ENCODE measurements at regions of chr16 and their contacts with region 1.

Region 1: GRCh38 chr16:81737885-81738786 is 41.0 kb upstream of the PLCG2 start:
- DNase-seq: peak; percentile 96
- H3K4me3 Mint-ChIP-seq: peak overlapping the region; percentile 71
- H3K27ac Mint-ChIP-seq: peak overlapping the region; percentile 35
- H3K4me1 Mint-ChIP-seq: peaks cover 12% of the 10 kb centered on the region
- H3K27me3 Mint-ChIP-seq: peaks cover 2% of the 10 kb centered on the region

Region 2: GRCh38 chr16:81035398-81035974 is 702.6 kb before region 1 on chr16 and contains the start of gene ATMIN:
- intact Hi-C with region 1: loop called (anchors 1 kb)
- DNase-seq: peak; percentile 97
- H3K4me3 Mint-ChIP-seq: peak within 1 kb of the TSS; percentile 88
- H3K27ac Mint-ChIP-seq: peak within 1 kb of the TSS; percentile 69
- H3K4me1 Mint-ChIP-seq: peaks cover 20% of the 10 kb centered on the region
- H3K27me3 Mint-ChIP-seq: no peaks in the 10 kb centered on the region
- total RNA-seq, gene ATMIN: 31.1 and 33.5 TPM in 2 replicates

Region 3: GRCh38 chr16:81204798-81205680 is 533.1 kb before region 1 on chr16:
- intact Hi-C with region 1: loop called (anchors 1 kb)
- DNase-seq: peak; percentile 80
- H3K4me3 Mint-ChIP-seq: no peak overlapping the region
- H3K27ac Mint-ChIP-seq: no peak overlapping the region
- H3K4me1 Mint-ChIP-seq: no peaks in the 10 kb centered on the region
- H3K27me3 Mint-ChIP-seq: peaks cover 5% of the 10 kb centered on the region

Region 4: DNA sequence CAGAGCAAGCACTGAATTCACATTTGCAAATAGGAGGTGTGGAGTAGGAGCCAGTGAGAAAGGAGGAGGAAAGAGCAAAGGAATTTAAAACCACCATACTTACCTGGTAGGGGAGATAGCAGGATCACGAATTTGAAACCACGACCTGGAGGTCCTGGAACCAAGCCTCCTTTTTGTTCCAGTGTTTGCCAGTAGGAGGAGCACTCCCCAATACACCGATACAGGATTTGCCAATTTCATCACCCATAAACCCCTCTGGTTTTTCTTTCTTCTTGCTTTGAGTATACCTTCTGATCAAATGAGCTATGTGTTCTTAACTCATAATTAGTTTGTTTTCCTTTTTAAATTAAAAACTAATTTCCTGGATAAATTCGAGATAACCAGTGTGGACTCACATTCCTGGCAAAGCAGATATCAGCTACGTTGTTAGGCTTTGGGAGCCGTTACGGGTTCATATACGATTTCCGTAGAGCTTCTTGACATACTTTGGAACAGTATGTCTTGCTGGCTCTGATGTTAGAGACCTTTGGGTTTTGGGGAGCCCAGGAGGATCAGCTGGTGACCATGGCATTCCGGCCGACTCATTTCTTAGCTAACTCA is 477.0 kb before region 1 on chr16:
- intact Hi-C with region 1: loop called (anchors 5 kb)
- DNase-seq: peak; percentile 75
- H3K4me3 Mint-ChIP-seq: no peak overlapping the region
- H3K27ac Mint-ChIP-seq: no peak overlapping the region
- H3K4me1 Mint-ChIP-seq: peaks cover 2% of the 10 kb centered on the region
- H3K27me3 Mint-ChIP-seq: peaks cover 4% of the 10 kb centered on the region

Region 5: GRCh38 chr16:81366316-81366932 is 371.7 kb before region 1 on chr16:
- intact Hi-C with region 1: loop called (anchors 5 kb)
- DNase-seq: peak; percentile 78
- H3K4me3 Mint-ChIP-seq: no peak overlapping the region
- H3K27ac Mint-ChIP-seq: no peak overlapping the region
- H3K4me1 Mint-ChIP-seq: peaks cover 3% of the 10 kb centered on the region
- H3K27me3 Mint-ChIP-seq: no peaks in the 10 kb centered on the region

Region 6: GRCh38 chr16:81403616-81404373 is 334.3 kb before region 1 on chr16:
- intact Hi-C with region 1: loop called (anchors 5 kb)
- DNase-seq: peak; percentile 95
- H3K4me3 Mint-ChIP-seq: peak overlapping the region; percentile 39
- H3K27ac Mint-ChIP-seq: no peak overlapping the region
- H3K4me1 Mint-ChIP-seq: peaks cover 2% of the 10 kb centered on the region
- H3K27me3 Mint-ChIP-seq: peaks cover 1% of the 10 kb centered on the region

Region 7: GRCh38 chr16:81645266-81645694 is 92.9 kb before region 1 on chr16:
- intact Hi-C with region 1: no loop called
- DNase-seq: no peak
- H3K4me3 Mint-ChIP-seq: no peak overlapping the region
- H3K27ac Mint-ChIP-seq: no peak overlapping the region
- H3K4me1 Mint-ChIP-seq: peaks cover 20% of the 10 kb centered on the region
- H3K27me3 Mint-ChIP-seq: no peaks in the 10 kb centered on the region

Region 8: DNA sequence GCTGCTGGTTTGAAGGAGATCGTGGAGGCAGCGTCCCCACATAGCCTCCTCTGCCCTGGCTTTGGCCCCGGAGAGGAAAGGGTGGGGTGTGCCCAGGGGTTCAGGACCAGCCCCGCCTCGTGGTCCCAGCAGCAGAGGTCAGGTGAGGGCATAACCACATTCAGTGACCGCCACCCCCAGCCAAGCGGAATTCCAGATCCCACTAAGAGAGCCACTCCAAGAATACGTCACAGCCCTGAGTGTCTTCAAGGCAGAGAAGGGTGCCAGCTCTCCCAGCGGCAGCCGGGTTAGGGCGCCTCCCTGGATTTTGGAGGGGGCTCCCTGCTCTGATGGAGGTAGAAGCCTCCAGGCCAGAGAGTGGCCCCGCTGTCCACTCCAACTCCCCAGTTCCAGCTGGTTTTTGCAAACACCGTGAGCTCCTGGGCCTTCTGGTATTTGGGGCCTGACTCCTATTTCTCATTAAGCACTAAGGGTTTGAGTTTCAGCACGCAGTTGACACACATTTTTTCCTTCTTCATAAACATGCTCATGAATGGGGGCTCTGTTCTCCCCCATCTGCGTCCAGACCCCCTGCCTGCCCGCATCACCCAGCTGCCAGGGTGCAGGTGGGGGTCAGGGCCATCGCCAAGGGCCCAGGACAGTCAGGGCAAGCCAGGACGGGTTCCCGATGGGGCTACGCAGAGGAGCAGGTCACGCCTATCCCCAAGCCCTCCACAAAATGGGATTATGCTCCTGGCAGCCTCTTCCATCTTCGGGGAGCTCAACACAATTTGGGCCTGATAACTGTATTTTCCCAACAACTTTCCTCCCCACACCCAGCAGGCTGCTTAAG is 57.5 kb before region 1 on chr16:
- intact Hi-C with region 1: no loop called
- DNase-seq: no peak
- H3K4me3 Mint-ChIP-seq: no peak overlapping the region
- H3K27ac Mint-ChIP-seq: no peak overlapping the region
- H3K4me1 Mint-ChIP-seq: peaks cover 5% of the 10 kb centered on the region
- H3K27me3 Mint-ChIP-seq: no peaks in the 10 kb centered on the region